Right ventricle myocardium inferior (tissue), 1 donor: ENCODE measurements at regions of chr20 and their contacts with region 1.

Region 1: GRCh38 chr20:31572701-31573554 is 32.2 kb upstream of the ID1 start:
- DNase-seq: peak; percentile 95
- ATAC-seq: peak; percentile 89

Region 2: GRCh38 chr20:31587545-31588389 is 14.8 kb after region 1 on chr20:
- intact Hi-C with region 1: loop called (anchors 2 kb)
- DNase-seq: no peak
- ATAC-seq: peak; percentile 87

Region 3: GRCh38 chr20:31605031-31605901 is 32.3 kb after region 1 on chr20 and contains the start of gene ID1:
- intact Hi-C with region 1: loop called (anchors 2 kb)
- DNase-seq: peak; percentile 97
- ATAC-seq: peak; percentile 96
- total RNA-seq, gene ID1: 98.9 TPM

Region 4: DNA sequence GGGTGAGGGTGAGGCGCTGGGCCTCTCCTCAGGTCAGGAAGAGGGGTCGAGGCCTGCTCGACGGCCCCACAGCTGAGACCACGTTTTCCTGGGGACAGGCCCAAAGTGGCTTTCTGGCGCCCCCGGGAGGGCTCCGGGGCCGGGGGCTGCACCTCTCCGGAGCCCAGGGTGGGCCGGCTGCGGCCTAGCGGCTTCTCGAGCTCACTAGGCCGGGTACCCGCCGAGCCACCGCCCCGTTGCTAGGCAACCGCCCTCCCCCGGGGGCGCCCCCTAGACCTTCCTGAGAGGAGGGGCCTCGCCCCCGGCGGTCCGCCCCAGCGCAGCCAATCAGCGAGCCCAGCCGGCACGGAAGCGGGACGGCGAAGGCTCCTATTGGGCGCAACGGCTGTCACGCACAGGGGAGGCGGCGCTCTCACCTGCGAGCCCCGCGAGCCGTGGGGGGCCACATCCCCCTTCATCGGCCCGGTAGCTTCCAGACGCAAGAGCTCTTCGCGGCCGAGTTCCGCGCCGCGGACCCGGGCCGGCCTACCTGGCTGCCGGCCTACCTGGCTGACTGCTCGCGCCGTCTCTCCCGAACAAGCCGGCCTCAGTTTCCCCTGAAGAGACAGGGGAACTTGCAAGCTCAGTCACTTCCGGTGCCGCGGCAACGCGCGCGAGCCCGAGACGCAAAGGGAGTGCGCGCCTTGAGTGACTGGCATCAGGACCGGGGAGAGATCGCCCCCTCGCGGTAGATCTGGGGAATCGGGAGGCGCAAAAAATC is 150.6 kb after region 1 on chr20:
- intact Hi-C with region 1: loop called (anchors 5 kb)
- DNase-seq: peak; percentile 99
- ATAC-seq: peak; percentile 96